ENCODE measurements at regions of chr11 and their contacts with region 1.

Region 1: DNA sequence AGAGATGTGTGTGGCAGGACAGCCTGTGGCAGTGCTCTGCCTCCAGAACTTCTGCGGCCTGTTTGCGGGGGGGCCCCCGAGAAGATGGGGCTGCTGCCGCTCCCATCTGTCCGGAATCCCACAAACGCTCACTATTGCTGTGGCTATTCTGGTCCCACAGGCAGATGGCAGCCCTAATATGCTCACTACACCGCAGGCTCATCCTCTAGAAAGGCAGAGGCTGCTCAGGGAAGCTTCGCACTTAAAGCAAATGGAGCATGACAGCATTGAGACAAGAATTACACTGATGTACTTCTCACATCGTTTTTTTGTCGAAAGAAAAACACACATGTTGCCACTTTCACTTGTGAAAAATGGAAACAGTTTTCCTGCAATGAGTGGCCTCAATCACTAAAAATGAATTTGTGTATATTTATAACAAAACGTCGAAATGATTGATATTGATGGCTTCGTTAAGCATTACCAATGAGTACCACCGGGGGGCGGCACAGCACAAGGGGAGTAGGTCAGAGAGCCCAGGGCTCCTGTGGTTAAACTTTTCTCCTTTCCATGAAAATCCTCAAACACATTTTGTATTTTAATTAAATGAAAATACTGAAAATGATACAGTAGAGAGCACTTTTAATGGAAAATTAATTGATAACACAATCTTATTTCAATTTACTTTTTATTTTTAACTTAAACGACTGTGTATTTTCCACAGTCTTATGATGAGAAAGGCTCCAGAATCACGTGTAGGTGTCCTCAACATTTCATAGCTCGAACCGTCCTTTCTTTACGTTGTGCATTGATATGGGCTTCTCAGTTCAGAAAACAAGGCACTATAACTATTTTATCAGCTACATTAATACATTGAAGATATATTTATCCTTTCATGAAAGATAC is 69.1 kb downstream of the CTTN start:
- DNase-seq: peak; percentile 73
- ATAC-seq: peak; percentile 51

Region 2: DNA sequence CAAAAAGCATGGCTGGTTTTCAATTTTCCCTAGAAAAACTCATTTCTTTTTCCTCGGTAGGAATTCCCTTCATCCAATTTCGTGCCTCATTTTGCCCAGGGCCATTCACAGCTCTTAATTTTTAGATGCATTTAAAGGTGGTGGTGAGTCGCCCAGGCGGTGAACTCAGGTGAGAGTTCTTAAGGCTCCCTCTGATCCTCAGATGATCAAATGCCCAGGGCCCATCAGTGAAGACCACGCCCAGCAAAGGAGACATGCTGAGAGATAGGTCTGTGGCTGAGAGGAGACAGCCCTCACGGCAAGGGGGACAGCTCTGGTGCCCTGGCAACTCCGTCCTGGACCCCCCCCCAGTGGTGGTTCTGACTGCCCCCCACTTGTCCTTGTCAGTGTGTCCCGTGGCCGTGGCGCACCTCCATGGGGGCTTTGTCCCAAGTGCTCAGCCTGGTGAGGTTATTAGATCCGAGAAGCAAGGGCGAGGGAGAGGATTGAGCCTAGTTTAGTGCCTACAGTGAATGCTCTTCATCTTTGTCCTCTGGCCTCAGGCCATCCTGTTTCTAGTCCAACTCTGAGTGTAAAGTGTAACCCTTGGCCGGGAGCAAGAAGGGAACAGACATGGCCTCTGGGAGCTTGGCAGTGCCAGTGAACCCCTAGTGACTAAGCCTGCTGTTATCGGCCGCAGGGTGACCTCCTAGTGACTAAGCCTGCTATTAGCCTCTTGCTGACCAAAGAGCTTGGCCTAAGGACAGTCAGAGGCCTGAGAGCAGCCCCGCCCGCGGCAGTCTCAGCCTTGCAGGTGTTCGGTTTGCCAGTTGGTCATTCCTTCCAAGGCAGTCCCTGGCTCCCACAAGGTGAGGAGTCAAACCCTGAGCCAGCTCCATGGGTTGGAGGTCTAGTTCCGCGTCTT is 14.4 kb after region 1 on chr11:
- intact Hi-C with region 1: loop called (anchors 1 kb)
- DNase-seq: peak; percentile 57
- ATAC-seq: peak; percentile 78

Region 3: GRCh38 chr11:70556884-70557741 is 89.7 kb after region 1 on chr11:
- intact Hi-C with region 1: no loop called
- DNase-seq: peak; percentile 17
- ATAC-seq: no peak

Region 4: DNA sequence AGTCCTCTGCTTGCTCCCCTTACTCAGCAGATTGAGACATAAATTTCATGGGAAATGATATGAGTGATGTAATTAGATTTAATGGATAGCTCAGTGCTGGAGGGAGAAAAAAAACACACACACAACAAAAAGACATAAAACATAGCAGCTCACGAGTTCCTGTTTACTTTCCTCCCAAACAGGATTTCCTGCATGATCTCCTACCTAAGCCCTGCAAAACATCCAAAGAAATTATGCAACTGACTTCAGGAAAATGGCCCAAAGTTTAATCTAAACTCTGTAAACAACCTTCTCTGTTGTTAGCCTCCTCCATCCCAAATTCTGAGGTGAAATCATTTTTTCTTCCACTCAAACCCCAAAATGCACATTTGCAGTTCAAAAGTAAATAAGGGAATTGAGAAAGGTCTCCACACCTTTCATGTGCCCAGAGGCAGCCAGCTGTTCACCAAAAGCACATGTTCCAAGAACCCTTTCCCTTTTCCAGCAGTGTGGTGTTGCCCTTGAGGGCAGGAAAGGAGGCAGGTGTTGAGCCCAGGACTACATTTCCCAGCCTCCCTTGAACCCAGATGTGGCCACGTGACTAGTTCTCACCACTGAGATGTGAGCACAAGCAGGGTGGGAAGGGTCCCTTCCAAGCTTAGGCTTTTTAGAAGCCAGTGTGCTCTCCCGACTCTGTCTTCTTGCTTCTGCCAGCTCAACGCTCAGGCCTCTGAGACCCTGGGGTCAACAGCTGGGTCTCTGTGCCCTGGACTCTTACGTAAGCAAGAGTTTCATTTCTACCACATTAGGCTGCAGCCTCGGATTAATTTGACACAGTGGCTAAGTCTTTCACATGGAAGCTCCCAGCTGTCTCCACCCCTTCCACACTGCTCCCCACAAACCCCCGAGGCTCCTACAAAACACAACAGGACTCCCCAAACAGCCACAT is 232.1 kb after region 1 on chr11:
- intact Hi-C with region 1: no loop called
- DNase-seq: peak; percentile 32
- ATAC-seq: no peak

Region 5: GRCh38 chr11:70755410-70756161 is 288.1 kb after region 1 on chr11:
- intact Hi-C with region 1: loop called (anchors 1 kb)
- DNase-seq: peak; percentile 87
- ATAC-seq: peak; percentile 95